ENCODE measurements at regions of chr20 and their contacts with region 1.

Region 1: GRCh38 chr20:47886460-47887041 is 101.3 kb upstream of the SULF2 start:
- DNase-seq: no peak
- H3K4me3 ChIP-seq: no peak overlapping the region
- H3K27ac ChIP-seq: no peak overlapping the region
- H3K4me1 ChIP-seq: no peaks in the 10 kb centered on the region
- H3K27me3 ChIP-seq: peaks cover 0 to 15% of the 10 kb centered on the region in 2 donors
- CTCF ChIP-seq: no peak

Region 2: GRCh38 chr20:47809111-47809912 is 77.2 kb before region 1 on chr20:
- intact Hi-C with region 1: no loop called
- DNase-seq: peak in 1 of 2 donors; percentile 57
- H3K4me3 ChIP-seq: no peak overlapping the region
- H3K27ac ChIP-seq: no peak overlapping the region
- H3K4me1 ChIP-seq: no peaks in the 10 kb centered on the region
- H3K27me3 ChIP-seq: peaks cover 0 to 60% of the 10 kb centered on the region in 2 donors
- CTCF ChIP-seq: no peak

Region 3: DNA sequence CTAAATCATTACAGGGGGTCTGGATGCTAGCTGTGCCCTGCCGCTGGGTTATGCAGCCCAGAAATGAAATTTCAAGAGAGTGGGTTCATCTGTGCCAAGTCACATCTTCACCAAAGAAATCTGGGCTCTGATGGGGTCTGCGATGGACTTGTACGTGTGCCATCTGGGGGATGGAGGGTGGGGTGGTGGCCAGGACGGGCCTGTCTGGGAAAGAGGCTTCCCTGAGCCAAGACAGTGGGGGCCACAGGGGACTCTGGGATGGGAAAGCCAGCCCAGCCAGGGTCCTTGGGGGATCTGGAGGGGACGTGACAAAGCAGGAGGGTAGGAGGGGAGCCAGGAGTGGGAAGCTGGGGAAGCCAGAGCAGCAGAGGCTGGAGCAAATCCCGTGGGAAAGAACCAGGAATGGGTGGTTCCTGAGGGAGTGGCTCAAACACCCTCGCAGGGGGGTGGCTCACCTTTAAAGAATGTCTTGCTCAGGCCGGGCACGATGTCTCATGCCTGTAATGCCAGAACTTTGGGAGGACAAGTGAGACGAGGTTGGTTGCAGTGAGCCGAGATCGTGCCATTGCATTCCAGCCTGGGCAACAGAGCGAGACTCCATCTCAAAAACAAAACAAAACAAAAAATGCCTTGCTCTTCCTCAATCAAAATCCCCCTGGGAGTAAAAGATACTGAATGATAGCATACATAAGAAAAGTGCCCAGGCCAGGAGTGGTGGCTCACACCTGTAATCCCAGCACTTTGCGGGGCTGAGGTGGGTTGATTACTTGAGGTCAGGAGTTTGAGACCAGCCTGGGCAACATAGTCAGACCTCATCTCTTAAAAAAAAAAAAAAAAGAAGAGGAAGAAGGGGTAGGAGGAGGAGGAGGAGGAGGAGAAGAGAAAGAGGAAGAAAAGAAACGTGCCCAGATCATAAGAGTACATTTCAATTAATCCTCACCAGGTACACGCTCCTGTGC is 64.8 kb before region 1 on chr20:
- intact Hi-C with region 1: loop called (anchors 10 kb)
- DNase-seq: peak in 1 of 2 donors; percentile 43
- H3K4me3 ChIP-seq: no peak overlapping the region
- H3K27ac ChIP-seq: no peak overlapping the region
- H3K4me1 ChIP-seq: no peaks in the 10 kb centered on the region
- H3K27me3 ChIP-seq: peaks cover 0 to 36% of the 10 kb centered on the region in 2 donors
- CTCF ChIP-seq: no peak